ENCODE measurements at regions of chr16 and their contacts with region 1.

Region 1: DNA sequence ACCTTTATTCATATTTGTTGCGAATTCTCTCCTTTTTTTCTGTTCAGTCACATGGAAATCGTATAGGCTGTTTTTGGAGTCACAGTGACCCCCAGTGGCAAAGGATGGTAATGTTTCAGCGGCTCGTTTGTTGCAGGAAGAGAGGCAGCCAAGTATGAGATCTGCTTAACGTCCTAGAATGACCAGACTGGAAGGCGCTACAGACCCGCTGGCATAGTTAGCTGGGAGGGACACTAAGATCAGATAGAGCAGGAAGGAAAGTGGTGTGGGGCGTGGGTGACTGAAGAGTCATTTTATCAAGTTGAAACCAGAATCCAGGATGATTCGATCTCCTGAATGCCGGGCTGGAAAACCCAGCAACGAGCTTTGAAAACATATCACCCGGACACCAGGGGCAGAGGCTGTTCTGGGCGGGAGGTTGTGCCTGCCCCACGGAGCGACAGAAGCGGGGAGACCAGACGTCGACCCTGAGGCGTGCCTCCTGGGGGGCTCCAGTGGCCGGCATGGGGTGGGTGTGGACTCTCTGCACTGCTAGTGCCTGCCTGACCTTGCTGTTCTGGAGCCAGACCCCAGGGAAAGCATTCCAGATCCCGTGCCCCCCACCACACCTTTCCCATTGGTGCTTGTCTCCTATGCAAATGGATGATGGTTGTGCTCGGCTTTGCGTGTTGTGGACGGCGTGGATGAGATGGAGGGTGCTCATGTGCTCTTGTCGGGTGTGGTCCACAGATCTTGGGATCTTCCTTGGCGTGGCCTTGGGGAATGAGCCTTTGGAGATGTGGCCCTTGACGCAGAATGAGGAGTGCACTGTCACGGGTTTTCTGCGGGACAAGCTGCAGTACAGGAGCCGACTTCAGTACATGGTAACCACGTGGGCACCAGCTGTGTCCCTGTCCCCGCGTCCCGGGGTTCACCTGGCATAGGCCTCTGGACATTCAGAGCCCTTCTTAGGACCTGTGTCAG is 7.7 kb downstream of the IL34 start:
- DNase-seq: peak; percentile 73 to 95 (median 86)
- H3K4me3 ChIP-seq: no peak overlapping the region
- H3K27ac ChIP-seq: peak overlapping the region in 2 of 5 donors; percentile 48 to 66
- H3K4me1 ChIP-seq: peaks cover 0 to 8% of the 10 kb centered on the region in 2 donors
- H3K27me3 ChIP-seq: no peaks in the 10 kb centered on the region
- CTCF ChIP-seq: peak; percentile 91 to 99 (median 95)
- POLR2A ChIP-seq: no peak

Region 2: DNA sequence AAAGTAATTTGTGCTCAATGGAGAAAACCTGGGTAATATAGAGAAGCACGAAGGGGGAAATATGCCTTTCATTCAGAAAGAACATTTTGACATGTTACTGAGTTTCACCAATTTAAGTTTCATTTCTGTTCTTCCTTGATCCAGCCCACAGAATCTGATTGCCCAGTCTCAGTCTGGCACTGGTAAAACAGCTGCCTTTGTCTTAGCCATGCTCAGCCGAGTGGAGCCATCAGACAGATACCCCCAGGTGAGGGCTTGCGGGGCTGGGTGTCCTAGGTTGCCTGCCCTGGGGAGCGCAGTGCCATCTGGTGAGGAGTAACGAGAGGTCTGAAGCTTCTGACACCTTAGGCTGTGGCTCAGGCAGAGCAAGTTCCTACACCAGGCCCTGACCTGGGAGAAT is 289.7 kb before region 1 on chr16:
- intact Hi-C with region 1: loop called (anchors 5 to 10 kb)
- DNase-seq: no peak
- H3K4me3 ChIP-seq: no peak overlapping the region
- H3K27ac ChIP-seq: no peak overlapping the region
- H3K4me1 ChIP-seq: no peaks in the 10 kb centered on the region
- H3K27me3 ChIP-seq: no peaks in the 10 kb centered on the region
- CTCF ChIP-seq: no peak
- POLR2A ChIP-seq: no peak

Region 3: DNA sequence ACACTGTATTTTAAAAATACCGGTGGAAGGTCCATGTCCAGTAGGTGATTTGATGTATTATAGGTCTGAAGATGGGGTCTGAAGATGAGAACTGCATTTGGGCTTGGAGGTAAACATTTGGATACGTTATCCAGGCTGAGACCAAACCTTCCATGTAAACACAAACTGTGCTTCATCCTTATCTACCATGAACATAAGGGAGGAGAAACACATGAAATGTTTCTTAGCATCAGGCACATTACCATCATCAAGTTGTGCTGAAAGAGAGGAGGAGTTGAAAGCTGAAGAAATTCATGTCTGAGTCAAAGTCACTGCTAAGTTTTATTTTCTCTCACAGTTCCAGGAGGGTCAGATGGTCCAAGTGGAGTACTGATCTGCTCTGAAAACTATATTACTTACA is 119.1 kb before region 1 on chr16:
- intact Hi-C with region 1: loop called (anchors 5 to 10 kb)
- DNase-seq: no peak
- H3K4me3 ChIP-seq: no peak overlapping the region
- H3K27ac ChIP-seq: no peak overlapping the region
- H3K4me1 ChIP-seq: peaks cover 0 to under 1% of the 10 kb centered on the region in 2 donors
- H3K27me3 ChIP-seq: no peaks in the 10 kb centered on the region
- CTCF ChIP-seq: no peak
- POLR2A ChIP-seq: no peak

Region 4: GRCh38 chr16:70589998-70590471 is 64.1 kb before region 1 on chr16:
- intact Hi-C with region 1: no loop called
- DNase-seq: peak in 3 of 7 donors; percentile 33 to 54 (median 38)
- H3K4me3 ChIP-seq: no peak overlapping the region
- H3K27ac ChIP-seq: peak overlapping the region in 4 of 5 donors; percentile 67 to 89 (median 85)
- H3K4me1 ChIP-seq: peaks cover 30 to 61% of the 10 kb centered on the region in 2 donors
- H3K27me3 ChIP-seq: no peaks in the 10 kb centered on the region
- CTCF ChIP-seq: no peak
- POLR2A ChIP-seq: no peak